MCF 10A (cell line): ENCODE measurements at regions of chr19 and their contacts with region 1.

Region 1: GRCh38 chr19:55385740-55386529 is at the start of gene RPL28:
- DNase-seq: peak; percentile 99
- H3K4me3 Mint-ChIP-seq: peak within 1 kb of the TSS; percentile 89
- H3K27ac Mint-ChIP-seq: peak within 1 kb of the TSS; percentile 93
- H3K4me1 Mint-ChIP-seq: peaks cover 42% of the 10 kb centered on the region
- H3K27me3 Mint-ChIP-seq: no peaks in the 10 kb centered on the region
- CTCF ChIP-seq: no peak
- total RNA-seq, gene RPL28: 2,816 and 2,868 TPM in 2 replicates

Region 2: GRCh38 chr19:54921082-54921481 is 464.9 kb before region 1 on chr19:
- CTCF ChIA-PET with region 1: no interaction called
- POLR2A ChIA-PET with region 1: no interaction called
- intact Hi-C with region 1: no loop called
- DNase-seq: no peak
- H3K4me3 Mint-ChIP-seq: no peak overlapping the region
- H3K27ac Mint-ChIP-seq: no peak overlapping the region
- H3K4me1 Mint-ChIP-seq: no peaks in the 10 kb centered on the region
- H3K27me3 Mint-ChIP-seq: no peaks in the 10 kb centered on the region
- CTCF ChIP-seq: no peak

Region 3: DNA sequence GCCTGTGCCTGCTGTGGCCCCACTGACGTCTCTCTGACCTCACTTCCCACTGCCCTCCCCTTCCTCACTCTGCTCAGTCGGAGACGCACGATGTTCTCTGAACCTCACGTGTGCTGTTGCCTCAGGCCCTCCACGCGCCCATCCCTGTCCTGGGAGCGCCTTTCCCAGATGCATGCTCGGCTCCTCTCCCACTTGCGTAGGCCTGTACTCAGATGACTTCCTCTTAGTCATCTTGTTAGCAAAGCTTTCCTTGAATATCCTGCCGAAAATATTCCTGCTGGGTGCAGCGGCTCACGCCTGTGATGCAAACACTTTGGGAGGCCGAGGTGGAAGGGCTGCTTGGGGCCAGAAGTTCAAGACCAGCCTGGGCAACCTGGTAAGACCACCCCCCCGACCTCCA is 196.5 kb before region 1 on chr19:
- CTCF ChIA-PET with region 1: no interaction called
- POLR2A ChIA-PET with region 1: interaction called, 14 read pairs
- intact Hi-C with region 1: no loop called
- DNase-seq: peak; percentile 100
- H3K4me3 Mint-ChIP-seq: peak overlapping the region; percentile 64
- H3K27ac Mint-ChIP-seq: peak overlapping the region; percentile 99
- H3K4me1 Mint-ChIP-seq: peaks cover 14% of the 10 kb centered on the region
- H3K27me3 Mint-ChIP-seq: no peaks in the 10 kb centered on the region
- CTCF ChIP-seq: no peak

Region 4: DNA sequence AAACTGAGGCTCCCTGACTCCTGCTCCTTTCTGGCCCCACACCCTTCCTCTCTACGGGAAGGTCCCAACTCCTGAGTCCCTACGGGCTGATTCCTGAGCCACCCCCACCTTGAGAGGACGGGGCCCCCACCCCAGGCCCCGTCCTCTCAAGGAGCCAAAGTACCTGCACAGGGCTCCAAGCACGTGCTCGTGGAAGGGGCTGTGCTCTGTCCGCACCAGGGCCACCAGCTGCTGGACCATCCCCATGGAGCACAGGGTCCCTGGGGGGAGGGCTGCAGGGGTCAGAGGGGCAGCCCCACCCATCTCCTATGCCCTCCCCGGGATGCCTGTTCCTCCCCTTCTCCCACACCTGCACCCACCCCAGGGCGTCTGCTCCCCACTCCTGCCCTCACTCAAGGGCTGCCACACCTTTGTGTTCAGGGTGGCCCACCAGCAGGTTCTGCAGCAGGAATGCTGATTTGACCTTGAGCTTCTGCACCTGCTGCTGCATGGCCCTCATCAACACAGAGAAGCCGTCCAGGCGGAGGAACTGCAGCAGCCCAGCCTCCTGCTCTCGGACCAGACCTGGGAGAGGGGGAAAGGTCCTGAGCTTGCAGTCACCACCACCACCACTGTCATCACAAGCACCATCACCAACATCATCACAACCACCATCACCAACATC is 120.1 kb before region 1 on chr19:
- CTCF ChIA-PET with region 1: no interaction called
- POLR2A ChIA-PET with region 1: no interaction called
- intact Hi-C with region 1: no loop called
- DNase-seq: no peak
- H3K4me3 Mint-ChIP-seq: no peak overlapping the region
- H3K27ac Mint-ChIP-seq: no peak overlapping the region
- H3K4me1 Mint-ChIP-seq: no peaks in the 10 kb centered on the region
- H3K27me3 Mint-ChIP-seq: no peaks in the 10 kb centered on the region
- CTCF ChIP-seq: no peak

Region 5: GRCh38 chr19:55279770-55280643 is 105.9 kb before region 1 on chr19 and contains the start of gene HSPBP1:
- CTCF ChIA-PET with region 1: interaction called, 3 read pairs
- POLR2A ChIA-PET with region 1: interaction called, 12 read pairs
- intact Hi-C with region 1: no loop called
- DNase-seq: peak; percentile 98
- H3K4me3 Mint-ChIP-seq: peak within 1 kb of the TSS; percentile 96
- H3K27ac Mint-ChIP-seq: peak within 1 kb of the TSS; percentile 100
- H3K4me1 Mint-ChIP-seq: peaks cover 34% of the 10 kb centered on the region
- H3K27me3 Mint-ChIP-seq: peaks cover 12% of the 10 kb centered on the region
- CTCF ChIP-seq: no peak
- total RNA-seq, gene HSPBP1: 49.2 and 53.1 TPM in 2 replicates

Region 6: DNA sequence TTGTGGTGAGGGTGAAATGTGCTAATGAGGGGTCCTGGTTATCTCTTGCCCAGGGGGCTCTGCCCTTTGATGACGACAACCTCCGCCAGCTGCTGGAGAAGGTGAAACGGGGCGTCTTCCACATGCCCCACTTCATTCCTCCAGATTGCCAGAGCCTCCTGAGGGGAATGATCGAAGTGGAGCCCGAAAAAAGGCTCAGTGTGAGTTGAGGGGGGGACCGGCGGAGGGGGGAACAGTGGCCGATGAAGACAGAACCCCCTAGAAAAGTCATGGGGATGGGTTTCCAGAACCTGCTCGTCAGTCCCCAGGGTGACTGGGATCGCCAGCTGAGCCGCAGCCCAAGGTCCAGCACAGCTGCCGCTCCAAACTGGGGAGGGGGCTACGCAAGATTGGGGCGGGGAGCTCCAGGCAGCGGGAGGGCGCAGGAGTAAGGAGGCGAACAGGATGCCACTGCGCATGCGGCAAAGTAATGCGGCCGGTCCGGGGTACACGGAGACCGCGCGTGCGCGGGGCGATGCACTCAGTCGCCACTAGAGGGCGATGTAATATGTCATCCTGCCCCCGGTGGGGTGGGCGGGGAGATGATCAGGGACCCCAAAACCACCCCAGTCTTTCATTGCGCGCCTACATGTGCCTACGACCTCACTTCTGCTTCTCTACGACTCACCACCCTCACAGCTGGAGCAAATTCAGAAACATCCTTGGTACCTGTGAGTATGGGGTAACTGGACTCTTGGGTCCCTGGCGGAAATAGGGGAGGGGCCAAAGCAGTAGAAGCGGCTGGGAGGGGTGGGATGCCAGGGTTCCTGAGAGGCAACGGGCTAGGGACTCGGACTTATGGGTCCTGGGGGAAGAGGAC is 84.2 kb before region 1 on chr19:
- CTCF ChIA-PET with region 1: interaction called, 39 read pairs
- POLR2A ChIA-PET with region 1: interaction called, 17 read pairs
- intact Hi-C with region 1: loop called (anchors 1 kb)
- DNase-seq: peak; percentile 81
- H3K4me3 Mint-ChIP-seq: peak overlapping the region; percentile 58
- H3K27ac Mint-ChIP-seq: no peak overlapping the region
- H3K4me1 Mint-ChIP-seq: no peaks in the 10 kb centered on the region
- H3K27me3 Mint-ChIP-seq: no peaks in the 10 kb centered on the region
- CTCF ChIP-seq: peak; percentile 96

Region 7: DNA sequence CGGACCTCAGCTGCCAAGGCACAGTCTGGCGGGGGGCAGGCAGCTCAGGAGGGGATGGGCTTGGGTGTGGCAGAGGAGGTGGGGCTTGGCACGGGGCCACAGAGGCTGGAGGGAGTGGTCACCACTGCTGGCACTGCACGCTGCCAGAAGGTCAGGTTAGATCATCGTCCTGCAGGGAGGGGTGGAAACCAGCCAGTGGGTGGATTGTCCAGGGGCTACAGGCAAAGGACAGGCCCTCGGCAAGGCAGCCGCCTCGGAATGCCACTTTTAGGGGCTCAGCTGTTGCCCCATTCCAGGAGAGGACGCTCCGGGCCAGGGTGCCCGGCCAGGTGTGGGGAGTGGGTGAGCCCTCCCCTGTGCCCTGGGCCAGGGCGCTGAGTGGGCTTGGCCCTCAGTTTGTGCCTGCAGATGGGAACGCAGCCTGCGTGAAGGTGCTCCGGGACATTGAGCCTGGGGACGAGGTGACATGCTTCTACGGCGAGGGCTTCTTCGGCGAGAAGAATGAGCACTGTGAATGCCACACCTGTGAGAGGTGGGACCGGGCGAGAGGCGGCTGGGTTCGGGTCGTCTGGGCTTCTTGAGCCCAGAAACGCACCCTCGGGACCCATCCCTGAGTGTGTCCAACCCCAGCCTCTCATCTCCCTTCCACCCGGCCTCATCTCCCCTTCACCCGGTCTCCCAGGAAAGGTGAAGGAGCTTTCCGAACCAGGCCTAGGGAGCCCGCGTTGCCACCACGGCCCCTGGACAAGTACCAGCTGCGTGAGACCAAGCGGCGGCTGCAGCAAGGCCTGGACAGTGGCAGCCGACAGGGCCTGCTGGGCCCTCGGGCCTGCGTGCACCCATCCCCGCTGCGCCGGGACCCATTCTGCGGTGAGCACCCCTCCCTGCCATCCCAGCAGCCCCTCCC is 39.9 kb before region 1 on chr19:
- CTCF ChIA-PET with region 1: interaction called, 4 read pairs
- POLR2A ChIA-PET with region 1: interaction called, 18 read pairs
- intact Hi-C with region 1: no loop called
- DNase-seq: peak; percentile 74
- H3K4me3 Mint-ChIP-seq: no peak overlapping the region
- H3K27ac Mint-ChIP-seq: peak overlapping the region; percentile 87
- H3K4me1 Mint-ChIP-seq: peaks cover 17% of the 10 kb centered on the region
- H3K27me3 Mint-ChIP-seq: no peaks in the 10 kb centered on the region
- CTCF ChIP-seq: no peak

Region 8: GRCh38 chr19:55452749-55453346 is 66.9 kb after region 1 on chr19:
- CTCF ChIA-PET with region 1: interaction called, 6 read pairs
- POLR2A ChIA-PET with region 1: interaction called, 9 read pairs
- intact Hi-C with region 1: loop called (anchors 1 kb)
- DNase-seq: peak; percentile 71
- H3K4me3 Mint-ChIP-seq: peak overlapping the region; percentile 4
- H3K27ac Mint-ChIP-seq: no peak overlapping the region
- H3K4me1 Mint-ChIP-seq: no peaks in the 10 kb centered on the region
- H3K27me3 Mint-ChIP-seq: peaks cover 12% of the 10 kb centered on the region
- CTCF ChIP-seq: peak; percentile 8

Region 9: GRCh38 chr19:55643348-55644176 is 257.6 kb after region 1 on chr19 and contains the start of gene ZNF581:
- CTCF ChIA-PET with region 1: no interaction called
- POLR2A ChIA-PET with region 1: interaction called, 10 read pairs
- intact Hi-C with region 1: no loop called
- DNase-seq: peak; percentile 79
- H3K4me3 Mint-ChIP-seq: peak within 1 kb of the TSS; percentile 82
- H3K27ac Mint-ChIP-seq: peak within 1 kb of the TSS; percentile 94
- H3K4me1 Mint-ChIP-seq: peaks cover 18% of the 10 kb centered on the region
- H3K27me3 Mint-ChIP-seq: no peaks in the 10 kb centered on the region
- CTCF ChIP-seq: no peak
- total RNA-seq, gene ZNF581: 22.3 and 25.7 TPM in 2 replicates